Vagina (tissue), 2 donors: ENCODE measurements at regions of chr10 and their contacts with region 1.

Region 1: DNA sequence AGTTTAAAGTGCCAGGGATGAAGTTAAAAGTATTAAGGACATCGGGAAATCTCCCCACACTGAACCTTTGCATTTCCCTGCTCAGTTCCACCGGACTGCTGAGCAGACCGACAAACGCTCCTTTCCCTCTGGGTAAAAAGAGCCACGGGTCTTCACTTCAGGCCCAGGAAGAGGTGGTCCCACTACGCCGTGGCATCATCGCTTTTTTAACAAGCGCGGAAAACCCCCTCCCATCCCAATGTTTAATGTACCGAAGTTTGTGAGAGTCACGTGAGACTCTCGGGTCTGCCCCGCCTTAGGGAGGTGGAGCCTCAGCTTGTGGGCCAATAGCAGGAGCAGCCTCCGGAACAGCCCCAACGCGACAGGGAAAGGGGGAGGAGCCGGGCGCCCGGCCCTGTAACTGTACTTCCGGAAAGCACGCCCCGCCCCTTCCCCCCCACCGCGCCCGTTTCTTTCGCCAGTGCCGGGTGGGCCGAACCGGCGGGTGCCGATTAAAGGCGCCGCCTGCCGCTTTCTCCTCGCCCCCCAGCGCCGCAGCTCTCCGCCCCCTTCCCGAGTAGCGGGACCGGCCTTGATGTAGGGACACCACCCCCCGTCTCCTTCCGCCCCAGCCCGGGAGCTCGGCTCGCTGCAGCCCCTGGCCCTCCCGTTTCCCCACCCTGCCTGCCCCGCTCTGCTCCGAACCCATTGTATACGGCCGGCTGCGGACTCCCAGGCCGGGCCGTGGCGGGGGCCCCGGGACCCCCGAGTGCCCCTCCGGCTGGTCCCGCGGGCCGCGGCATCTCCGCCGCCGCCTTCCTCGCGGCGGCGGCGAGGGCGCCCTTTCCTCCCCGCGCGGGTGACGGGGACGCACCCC is 2.2 kb upstream of the TRIM8 start:
- DNase-seq: peak; percentile 99
- H3K4me3 ChIP-seq: peak overlapping the region; percentile 72 to 98
- H3K27ac ChIP-seq: peak overlapping the region; percentile 99
- H3K4me1 ChIP-seq: peaks cover 12% of the 10 kb centered on the region
- H3K27me3 ChIP-seq: no peaks in the 10 kb centered on the region
- CTCF ChIP-seq: no peak
- POLR2A ChIP-seq: peak in 1 of 2 donors; percentile 91

Region 2: GRCh38 chr10:102245101-102245931 is 396.8 kb before region 1 on chr10 and contains the start of gene GBF1:
- intact Hi-C with region 1: no loop called
- DNase-seq: peak in 1 of 2 donors; percentile 99
- H3K4me3 ChIP-seq: peak within 1 kb of the TSS; percentile 77 to 95
- H3K27ac ChIP-seq: peak within 1 kb of the TSS; percentile 79
- H3K4me1 ChIP-seq: peaks cover 56% of the 10 kb centered on the region
- H3K27me3 ChIP-seq: no peaks in the 10 kb centered on the region
- CTCF ChIP-seq: no peak
- POLR2A ChIP-seq: peak in 1 of 2 donors; percentile 95
- total RNA-seq, gene GBF1: 48.9 TPM

Region 3: GRCh38 chr10:102503281-102504220 is 138.6 kb before region 1 on chr10 and contains the start of gene SUFU:
- intact Hi-C with region 1: loop called (anchors 5 kb)
- DNase-seq: peak in 1 of 2 donors; percentile 99
- H3K4me3 ChIP-seq: peak within 1 kb of the TSS; percentile 88 to 100
- H3K27ac ChIP-seq: peak within 1 kb of the TSS; percentile 97
- H3K4me1 ChIP-seq: peaks cover 72% of the 10 kb centered on the region
- H3K27me3 ChIP-seq: no peaks in the 10 kb centered on the region
- CTCF ChIP-seq: peak; percentile 63 to 95 (median 87)
- POLR2A ChIP-seq: peak in 1 of 2 donors; percentile 67
- total RNA-seq, gene SUFU: 12.5 TPM

Region 4: GRCh38 chr10:102713814-102714620 is 71.9 kb after region 1 on chr10 and contains the start of gene ARL3:
- intact Hi-C with region 1: loop called (anchors 2 kb)
- DNase-seq: peak in 1 of 2 donors; percentile 99
- H3K4me3 ChIP-seq: peak within 1 kb of the TSS; percentile 88 to 95
- H3K27ac ChIP-seq: peak within 1 kb of the TSS; percentile 92
- H3K4me1 ChIP-seq: peaks cover 52% of the 10 kb centered on the region
- H3K27me3 ChIP-seq: no peaks in the 10 kb centered on the region
- CTCF ChIP-seq: peak in 2 of 3 experiments; percentile 22 to 49
- POLR2A ChIP-seq: peak in 1 of 2 donors; percentile 66
- total RNA-seq, gene ARL3: 7.4 TPM

Region 5: GRCh38 chr10:102726274-102726673 is 84.2 kb after region 1 on chr10:
- intact Hi-C with region 1: no loop called
- DNase-seq: no peak
- H3K4me3 ChIP-seq: no peak overlapping the region
- H3K27ac ChIP-seq: no peak overlapping the region
- H3K4me1 ChIP-seq: no peaks in the 10 kb centered on the region
- H3K27me3 ChIP-seq: no peaks in the 10 kb centered on the region
- CTCF ChIP-seq: no peak
- POLR2A ChIP-seq: no peak

Region 6: GRCh38 chr10:102815790-102816549 is 173.9 kb after region 1 on chr10:
- intact Hi-C with region 1: loop called (anchors 10 kb)
- DNase-seq: peak in 1 of 2 donors; percentile 94
- H3K4me3 ChIP-seq: no peak overlapping the region
- H3K27ac ChIP-seq: peak overlapping the region; percentile 87
- H3K4me1 ChIP-seq: peaks cover 51% of the 10 kb centered on the region
- H3K27me3 ChIP-seq: no peaks in the 10 kb centered on the region
- CTCF ChIP-seq: no peak
- POLR2A ChIP-seq: peak in 1 of 2 donors; percentile 25